ENCODE measurements at regions of chr6 and their contacts with region 1.

Region 1: DNA sequence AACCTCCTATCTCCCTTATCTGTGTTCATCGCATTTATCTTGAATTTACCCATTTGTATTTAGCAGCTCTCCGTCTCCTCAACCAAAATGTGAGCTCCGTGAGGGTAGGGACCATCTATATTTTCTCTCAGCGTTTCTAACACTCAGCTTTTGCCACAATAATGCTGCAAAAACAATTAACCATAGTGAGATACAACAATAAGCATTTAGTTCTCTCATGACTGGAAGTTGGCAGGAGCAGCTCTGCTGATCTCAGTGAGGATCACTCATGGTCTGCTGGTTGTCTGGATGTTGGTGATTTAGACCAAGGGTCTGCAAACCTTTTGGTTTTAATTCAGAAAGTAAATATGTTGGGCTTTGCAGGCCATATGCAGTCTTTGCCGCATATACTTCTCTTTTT is 394.8 kb upstream of the RNF217 start:
- DNase-seq: no peak
- ATAC-seq: no peak
- H3K4me3 ChIP-seq: no peak overlapping the region
- H3K27ac ChIP-seq: peak overlapping the region; percentile 11; the same call in 1 of the 2 replicates
- H3K4me1 ChIP-seq: no peaks in the 10 kb centered on the region
- H3K27me3 ChIP-seq: no peaks in the 10 kb centered on the region
- CTCF ChIP-seq: no peak

Region 2: GRCh38 chr6:126396131-126396530 is 1828.7 kb after region 1 on chr6:
- CTCF ChIA-PET with region 1: interaction called, 15 read pairs
- POLR2A ChIA-PET with region 1: no interaction called
- in situ Hi-C with region 1: no loop called
- intact Hi-C with region 1: no loop called
- DNase-seq: no peak
- ATAC-seq: no peak
- H3K4me3 ChIP-seq: no peak overlapping the region
- H3K27ac ChIP-seq: no peak overlapping the region
- H3K4me1 ChIP-seq: no peaks in the 10 kb centered on the region
- H3K27me3 ChIP-seq: no peaks in the 10 kb centered on the region
- CTCF ChIP-seq: no peak

Measured in Panc1 (cell line).